IMR-90 (cell line): ENCODE measurements at regions of chr2 and their contacts with region 1.

Region 1: DNA sequence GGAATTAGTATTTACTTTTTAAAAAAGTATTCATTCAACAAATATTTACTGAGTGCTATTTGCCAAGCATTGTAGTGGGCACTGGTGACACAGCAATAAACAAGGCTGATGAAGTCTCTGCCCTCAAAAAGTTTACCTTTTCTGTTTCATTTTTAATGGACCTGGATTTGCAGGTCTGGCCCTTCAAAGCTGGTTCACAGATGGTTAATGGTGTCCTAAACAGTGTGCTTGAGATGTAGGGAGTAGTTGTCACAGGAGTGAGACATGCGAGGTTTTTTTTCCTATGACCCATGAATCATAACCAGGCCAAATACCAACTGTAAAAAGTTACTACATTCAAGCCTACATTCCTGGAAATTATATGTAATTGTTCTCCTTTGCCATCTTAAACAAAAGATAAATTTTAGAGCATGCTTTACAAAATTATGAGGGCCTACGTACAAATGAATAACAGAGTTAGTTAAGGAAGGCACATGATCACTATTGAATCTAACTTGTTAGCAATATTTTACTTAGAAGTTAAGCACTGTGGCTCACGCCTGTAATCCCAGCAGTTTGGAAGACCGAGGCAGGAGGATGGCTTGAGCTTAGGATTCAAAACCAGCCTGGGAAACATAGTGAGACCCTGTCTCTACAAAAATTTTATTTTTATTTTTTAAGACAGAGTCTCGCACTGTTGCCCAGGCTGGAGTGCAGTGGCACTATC is 223.8 kb downstream of the MBD5 start:
- DNase-seq: peak; percentile 81
- ATAC-seq: peak; percentile 95
- H3K4me3 ChIP-seq: no peak overlapping the region
- H3K27ac ChIP-seq: peak overlapping the region; percentile 70; the same call in 1 of the 2 replicates
- H3K4me1 ChIP-seq: 0 out of 2 replicates have a peak, but pooled peaks cover 2% of the 10 kb centered on the region
- H3K27me3 ChIP-seq: no peaks in the 10 kb centered on the region
- CTCF ChIP-seq: no peak
- POLR2A ChIP-seq: no peak
- RAD21 ChIP-seq: no peak

Region 2: GRCh38 chr2:148282201-148282600 is 37.5 kb after region 1 on chr2:
- CTCF ChIA-PET with region 1: no interaction called
- POLR2A ChIA-PET with region 1: no interaction called
- dilution Hi-C with region 1: no loop called
- in situ Hi-C with region 1: no loop called
- intact Hi-C with region 1: no loop called
- DNase-seq: peak; percentile 45
- ATAC-seq: no peak
- H3K4me3 ChIP-seq: no peak overlapping the region
- H3K27ac ChIP-seq: no peak overlapping the region
- H3K4me1 ChIP-seq: no peaks in the 10 kb centered on the region; the same call in 1 of the 2 replicates
- H3K27me3 ChIP-seq: no peaks in the 10 kb centered on the region
- CTCF ChIP-seq: no peak
- POLR2A ChIP-seq: no peak
- RAD21 ChIP-seq: no peak

Region 3: DNA sequence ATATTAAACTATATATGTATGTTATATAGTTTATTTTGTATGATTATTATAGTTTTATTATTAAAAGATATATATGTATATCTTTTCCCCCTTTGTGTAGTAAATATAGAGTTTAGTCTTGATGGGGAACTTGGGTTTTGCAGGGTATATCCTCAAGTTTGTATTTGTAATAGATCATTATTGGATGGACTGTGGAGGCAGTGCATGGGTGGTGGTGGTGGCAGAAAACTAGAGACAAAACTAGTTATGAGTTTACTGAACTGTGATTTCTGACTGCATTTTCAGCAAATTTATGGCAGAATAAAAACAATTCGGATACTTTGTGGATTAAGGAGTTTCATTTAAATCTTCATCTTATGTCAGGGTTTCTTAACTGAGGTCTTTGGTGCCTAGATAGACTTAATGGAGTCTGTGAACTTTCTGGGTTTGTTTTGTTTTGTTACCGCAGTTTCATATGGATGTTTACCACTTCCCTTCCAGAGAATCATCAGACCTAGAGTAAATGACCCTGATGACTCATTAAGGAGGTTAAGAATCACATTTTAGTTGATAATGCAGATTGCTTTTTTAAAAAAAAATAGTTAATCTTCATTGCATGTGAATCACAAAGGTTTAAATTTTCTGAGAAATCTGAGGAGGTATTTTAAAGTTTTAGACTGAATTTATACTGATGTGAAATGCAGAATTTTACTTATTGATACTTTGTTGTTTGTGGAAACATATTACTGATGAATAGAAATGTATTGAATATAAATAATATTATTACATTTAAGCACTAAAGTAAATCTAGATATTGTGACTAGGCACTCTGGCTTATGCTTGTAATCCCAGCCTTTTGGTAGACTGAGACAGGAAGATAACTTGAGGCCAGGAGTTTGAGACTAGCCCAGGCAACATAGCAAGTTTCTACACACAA is 414.3 kb after region 1 on chr2:
- CTCF ChIA-PET with region 1: no interaction called
- POLR2A ChIA-PET with region 1: no interaction called
- dilution Hi-C with region 1: no loop called
- in situ Hi-C with region 1: no loop called
- intact Hi-C with region 1: no loop called
- DNase-seq: peak; percentile 79
- ATAC-seq: peak; percentile 59
- H3K4me3 ChIP-seq: no peak overlapping the region
- H3K27ac ChIP-seq: no peak overlapping the region
- H3K4me1 ChIP-seq: peaks cover 8% of the 10 kb centered on the region
- H3K27me3 ChIP-seq: no peaks in the 10 kb centered on the region
- CTCF ChIP-seq: no peak
- POLR2A ChIP-seq: no peak
- RAD21 ChIP-seq: no peak

Region 4: DNA sequence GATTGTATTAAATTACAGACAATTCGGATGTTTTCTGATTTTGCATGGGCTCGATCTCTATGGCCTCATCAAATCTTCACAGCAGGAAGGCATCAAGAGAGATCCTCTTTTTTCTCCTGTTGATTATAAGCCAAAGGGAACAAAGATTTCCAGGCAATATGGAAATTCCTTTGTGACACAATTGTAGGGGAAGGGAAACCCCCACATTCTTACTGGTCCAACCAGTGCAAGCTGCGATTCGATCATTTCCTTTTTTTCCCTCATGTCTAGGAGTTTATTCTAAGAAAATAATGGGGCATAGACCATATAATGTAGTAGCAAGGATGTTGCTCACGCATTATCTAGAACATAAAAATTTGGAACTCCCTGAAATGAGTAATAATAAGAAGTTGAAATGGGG is 1173.3 kb after region 1 on chr2:
- CTCF ChIA-PET with region 1: no interaction called
- POLR2A ChIA-PET with region 1: no interaction called
- dilution Hi-C with region 1: no loop called
- in situ Hi-C with region 1: no loop called
- intact Hi-C with region 1: loop called (anchors 5 kb)
- DNase-seq: no peak
- ATAC-seq: no peak
- H3K4me3 ChIP-seq: no peak overlapping the region
- H3K27ac ChIP-seq: no peak overlapping the region
- H3K4me1 ChIP-seq: peaks cover 2% of the 10 kb centered on the region; the same call in 1 of the 2 replicates
- H3K27me3 ChIP-seq: no peaks in the 10 kb centered on the region
- CTCF ChIP-seq: no peak
- POLR2A ChIP-seq: no peak
- RAD21 ChIP-seq: no peak